HEK293T (cell line): ENCODE measurements at regions of chr17 and their contacts with region 1.

Region 1: DNA sequence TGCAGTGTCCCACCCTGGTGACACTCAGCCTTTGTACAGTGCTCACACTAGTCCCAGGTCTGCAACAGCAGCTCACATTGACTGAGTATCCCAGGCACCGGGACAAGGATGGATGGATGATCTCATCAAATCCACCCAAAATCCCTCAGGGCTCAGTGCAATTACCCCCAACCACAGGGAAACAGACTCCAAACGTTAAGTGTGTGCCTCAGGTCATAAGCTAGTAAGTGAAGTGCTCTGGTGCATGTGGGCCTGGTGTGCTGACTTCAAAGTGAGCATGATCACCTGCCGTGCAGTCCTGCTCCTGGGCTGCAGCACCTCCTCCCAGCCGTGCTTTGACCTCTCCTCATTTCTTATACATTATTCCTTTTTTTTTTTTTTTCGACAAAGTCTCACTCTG is 31.2 kb upstream of the CD300E start:
- DNase-seq: no peak

Region 2: DNA sequence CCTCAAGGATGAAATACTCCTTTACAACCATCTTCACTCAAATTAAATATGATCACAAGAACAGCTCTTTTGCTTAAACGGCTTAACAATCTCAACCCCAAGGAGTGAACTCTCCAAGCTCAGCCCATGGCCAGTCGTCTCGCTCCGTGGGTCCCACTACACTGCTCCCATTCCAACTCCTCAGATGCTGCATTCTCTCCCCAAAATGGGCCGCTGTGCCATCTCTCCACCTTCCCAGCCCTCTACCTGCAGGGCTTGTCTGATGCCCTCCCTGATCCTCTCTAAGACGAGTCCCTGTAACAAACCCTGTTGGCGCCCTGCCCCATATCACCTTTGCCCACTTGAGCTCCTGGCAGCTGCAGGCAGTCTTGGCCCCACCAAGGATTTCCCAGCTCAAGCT is 93.6 kb before region 1 on chr17:
- CTCF ChIA-PET with region 1: no interaction called
- POLR2A ChIA-PET with region 1: no interaction called
- DNase-seq: no peak

Region 3: GRCh38 chr17:74736513-74737298 is 82.0 kb after region 1 on chr17 and contains the start of gene RAB37:
- CTCF ChIA-PET with region 1: interaction called, 57 read pairs
- POLR2A ChIA-PET with region 1: no interaction called
- DNase-seq: no peak